ENCODE measurements at regions of chr17 and their contacts with region 1.

Region 1: DNA sequence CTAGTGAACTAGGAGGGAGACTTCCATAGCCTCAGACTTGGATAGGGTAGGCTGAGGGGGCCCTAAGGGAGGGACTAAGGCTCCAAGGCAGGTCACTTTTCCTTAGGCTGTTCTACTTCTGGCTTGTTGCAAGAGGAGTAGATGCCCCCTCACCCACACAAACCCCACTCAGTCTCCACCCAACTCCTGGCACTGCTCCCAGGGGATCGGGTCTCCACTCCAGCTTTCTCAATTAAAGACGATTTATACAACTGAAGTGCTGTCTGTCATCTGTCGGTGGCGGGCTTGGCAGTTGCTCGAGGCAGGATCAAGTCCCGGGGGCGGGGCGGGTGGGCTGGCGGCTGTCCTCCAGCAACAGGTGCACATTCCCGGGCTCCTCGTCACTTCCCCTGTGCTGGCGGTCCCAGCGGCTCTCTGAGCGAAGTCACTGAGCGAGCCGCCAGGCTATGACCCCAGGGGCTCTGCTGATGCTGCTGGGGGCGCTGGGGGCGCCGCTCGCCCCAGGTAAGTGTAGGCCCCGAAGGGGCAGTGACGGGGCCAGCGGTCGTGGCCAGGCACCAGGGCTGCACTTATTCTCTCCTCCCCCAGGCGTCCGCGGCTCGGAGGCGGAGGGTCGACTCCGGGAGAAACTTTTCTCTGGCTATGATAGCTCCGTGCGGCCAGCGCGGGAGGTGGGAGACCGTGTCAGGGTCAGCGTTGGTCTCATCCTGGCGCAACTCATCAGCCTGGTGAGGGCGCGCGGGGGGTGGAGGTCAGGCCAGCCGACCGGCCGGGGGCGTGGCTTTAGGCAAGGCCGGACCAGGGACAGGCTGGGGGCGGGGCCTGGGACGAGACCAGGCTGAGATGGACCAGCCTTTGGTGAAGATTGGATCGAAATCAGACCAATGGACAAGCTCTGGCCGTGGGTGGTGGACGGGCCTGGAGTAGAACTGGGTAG is at the start of gene CHRNB1:
- DNase-seq: peak; percentile 44
- ATAC-seq: peak; percentile 5
- H3K4me3 Mint-ChIP-seq: peak within 1 kb of the TSS; percentile 64
- H3K27ac Mint-ChIP-seq: no peak within 1 kb of the TSS
- H3K4me1 Mint-ChIP-seq: peaks cover 25% of the 10 kb centered on the region
- H3K27me3 Mint-ChIP-seq: peaks cover 57% of the 10 kb centered on the region
- CTCF ChIP-seq: no peak
- total RNA-seq, gene CHRNB1: 11.5 to 11.7 TPM

Region 2: GRCh38 chr17:7348478-7349242 is 96.3 kb before region 1 on chr17:
- CTCF ChIA-PET with region 1: no interaction called
- POLR2A ChIA-PET with region 1: no interaction called
- intact Hi-C with region 1: no loop called
- DNase-seq: no peak
- ATAC-seq: no peak
- H3K4me3 Mint-ChIP-seq: no peak overlapping the region
- H3K27ac Mint-ChIP-seq: peak overlapping the region; percentile 73
- H3K4me1 Mint-ChIP-seq: peaks cover 39% of the 10 kb centered on the region
- H3K27me3 Mint-ChIP-seq: no peaks in the 10 kb centered on the region
- CTCF ChIP-seq: no peak

Region 3: DNA sequence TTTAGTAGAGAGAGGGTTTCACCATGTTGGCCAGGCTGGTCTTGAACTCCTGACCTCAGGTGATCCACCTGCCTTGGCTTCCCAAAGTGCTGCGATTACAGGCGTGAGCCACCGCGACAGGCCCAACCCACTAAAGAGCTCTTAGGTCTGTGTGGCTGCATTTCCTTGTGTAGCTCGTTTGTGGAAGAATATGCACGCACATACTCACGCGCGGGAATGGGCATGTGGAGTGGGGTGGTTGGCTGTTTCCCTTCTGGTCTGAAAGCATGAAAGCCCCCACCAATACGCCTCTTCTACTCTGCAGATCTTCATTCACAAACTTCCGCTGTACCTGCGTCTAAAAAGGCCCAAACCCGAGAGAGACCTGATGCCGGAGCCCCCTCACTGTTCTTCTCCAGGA is 10.0 kb after region 1 on chr17:
- CTCF ChIA-PET with region 1: interaction called, 12 read pairs
- POLR2A ChIA-PET with region 1: interaction called, 83 read pairs
- intact Hi-C with region 1: no loop called
- DNase-seq: no peak
- ATAC-seq: no peak
- H3K4me3 Mint-ChIP-seq: peak overlapping the region; percentile 95
- H3K27ac Mint-ChIP-seq: peak overlapping the region; percentile 95
- H3K4me1 Mint-ChIP-seq: peaks cover 21% of the 10 kb centered on the region
- H3K27me3 Mint-ChIP-seq: no peaks in the 10 kb centered on the region
- CTCF ChIP-seq: no peak

Region 4: GRCh38 chr17:7478276-7479153 is 33.6 kb after region 1 on chr17:
- CTCF ChIA-PET with region 1: interaction called, 3 read pairs
- POLR2A ChIA-PET with region 1: interaction called, 53 read pairs
- intact Hi-C with region 1: no loop called
- DNase-seq: peak; percentile 79
- ATAC-seq: peak; percentile 35
- H3K4me3 Mint-ChIP-seq: peak overlapping the region; percentile 96
- H3K27ac Mint-ChIP-seq: peak overlapping the region; percentile 93
- H3K4me1 Mint-ChIP-seq: peaks cover 62% of the 10 kb centered on the region
- H3K27me3 Mint-ChIP-seq: no peaks in the 10 kb centered on the region
- CTCF ChIP-seq: no peak

Measured in activated CD8-positive, alpha-beta T cell treated with anti-CD3 and anti-CD28 coated beads for 36 hours (primary cell).